PC-9 (cell line): ENCODE measurements at regions of chr2 and their contacts with region 1.

Region 1: DNA sequence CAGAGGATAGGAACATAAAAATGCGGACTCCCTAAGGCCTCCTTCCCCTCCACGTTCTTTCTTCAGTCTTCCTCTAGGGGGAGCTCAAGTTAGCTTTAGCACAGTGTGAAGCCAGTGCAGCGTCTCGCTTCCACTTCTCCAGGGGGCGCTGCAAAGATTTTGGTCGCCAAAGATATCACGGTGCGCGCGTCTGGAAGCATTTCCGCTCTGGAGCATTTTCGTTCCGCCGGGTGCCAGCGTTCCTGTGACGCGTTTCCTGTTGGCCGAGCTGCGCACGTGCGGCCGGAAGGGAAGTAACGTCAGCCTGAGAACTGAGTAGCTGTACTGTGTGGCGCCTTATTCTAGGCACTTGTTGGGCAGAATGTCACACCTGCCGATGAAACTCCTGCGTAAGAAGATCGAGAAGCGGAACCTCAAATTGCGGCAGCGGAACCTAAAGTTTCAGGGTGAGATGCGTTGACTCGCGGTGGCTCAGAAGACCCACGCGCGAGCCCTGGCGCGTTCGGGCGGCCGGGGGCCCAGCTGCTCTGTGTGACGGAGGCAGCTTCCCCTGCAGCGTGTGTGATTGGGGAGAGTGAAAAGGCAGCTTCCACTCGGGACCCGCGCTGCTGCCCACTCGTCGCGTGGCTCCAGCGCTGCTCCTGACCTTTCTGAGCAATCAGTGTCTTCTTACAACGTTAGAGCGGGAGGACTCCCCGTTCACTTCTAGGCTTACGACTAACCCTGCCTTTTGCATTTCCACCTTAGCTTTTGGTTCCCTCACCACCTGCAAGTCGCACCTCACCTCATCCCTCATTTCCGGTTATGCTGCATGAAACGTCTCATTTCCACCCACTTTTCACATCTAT is at the start of gene DDX18:
- DNase-seq: peak; percentile 95 to 96
- H3K4me3 ChIP-seq: peak within 1 kb of the TSS; percentile 97
- H3K27ac ChIP-seq: peak within 1 kb of the TSS; percentile 54
- H3K4me1 ChIP-seq: peaks cover 15% of the 10 kb centered on the region
- H3K27me3 ChIP-seq: no peaks in the 10 kb centered on the region
- CTCF ChIP-seq: peak; percentile 100
- total RNA-seq, gene DDX18: 59.8 and 76.0 TPM in 2 replicates

Region 2: GRCh38 chr2:117359266-117359914 is 455.3 kb before region 1 on chr2:
- CTCF ChIA-PET with region 1: no interaction called
- POLR2A ChIA-PET with region 1: no interaction called
- intact Hi-C with region 1: no loop called
- DNase-seq: no peak
- H3K4me3 ChIP-seq: no peak overlapping the region
- H3K27ac ChIP-seq: no peak overlapping the region
- H3K4me1 ChIP-seq: no peaks in the 10 kb centered on the region
- H3K27me3 ChIP-seq: no peaks in the 10 kb centered on the region
- CTCF ChIP-seq: no peak

Region 3: DNA sequence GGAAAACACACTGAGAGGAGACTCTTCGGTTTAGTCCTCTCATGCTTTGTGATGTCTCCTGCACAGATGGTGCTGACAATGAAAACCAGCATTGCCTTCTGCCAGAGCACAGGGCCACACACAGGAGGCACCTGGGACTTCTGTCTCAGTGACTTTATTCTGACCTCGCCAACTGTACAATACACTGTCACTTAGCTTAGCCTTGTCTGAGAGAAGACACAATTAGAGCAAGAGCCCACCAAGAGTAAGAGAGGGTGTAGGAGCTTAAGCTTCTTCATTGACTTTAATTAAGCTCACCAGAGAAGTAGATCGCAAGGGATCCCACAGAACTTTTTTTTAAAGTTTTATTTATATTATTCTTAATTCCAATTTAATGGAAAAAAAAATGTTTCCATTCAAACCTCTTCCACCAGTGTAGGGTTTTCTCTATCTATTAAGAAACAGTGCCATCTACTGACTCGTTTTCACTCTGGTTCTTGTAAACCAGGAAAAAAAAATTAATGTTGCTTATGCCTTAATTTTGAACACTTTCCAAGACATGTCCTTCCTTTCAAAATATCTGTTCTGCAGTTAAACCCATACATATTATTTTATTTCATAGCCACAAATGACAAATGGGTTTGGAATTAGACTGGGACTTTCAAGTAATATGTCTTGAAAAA is 42.5 kb before region 1 on chr2:
- CTCF ChIA-PET with region 1: no interaction called
- POLR2A ChIA-PET with region 1: no interaction called
- intact Hi-C with region 1: no loop called
- DNase-seq: no peak
- H3K4me3 ChIP-seq: no peak overlapping the region
- H3K27ac ChIP-seq: no peak overlapping the region
- H3K4me1 ChIP-seq: no peaks in the 10 kb centered on the region
- H3K27me3 ChIP-seq: peaks cover 38% of the 10 kb centered on the region
- CTCF ChIP-seq: peak; percentile 72

Region 4: GRCh38 chr2:117835990-117836760 is 21.5 kb after region 1 on chr2:
- CTCF ChIA-PET with region 1: interaction called, 3 read pairs
- POLR2A ChIA-PET with region 1: interaction called, 14 read pairs
- intact Hi-C with region 1: no loop called
- DNase-seq: no peak
- H3K4me3 ChIP-seq: no peak overlapping the region
- H3K27ac ChIP-seq: no peak overlapping the region
- H3K4me1 ChIP-seq: no peaks in the 10 kb centered on the region
- H3K27me3 ChIP-seq: no peaks in the 10 kb centered on the region
- CTCF ChIP-seq: peak; percentile 28; the same call in 1 of the 2 replicates

Region 5: DNA sequence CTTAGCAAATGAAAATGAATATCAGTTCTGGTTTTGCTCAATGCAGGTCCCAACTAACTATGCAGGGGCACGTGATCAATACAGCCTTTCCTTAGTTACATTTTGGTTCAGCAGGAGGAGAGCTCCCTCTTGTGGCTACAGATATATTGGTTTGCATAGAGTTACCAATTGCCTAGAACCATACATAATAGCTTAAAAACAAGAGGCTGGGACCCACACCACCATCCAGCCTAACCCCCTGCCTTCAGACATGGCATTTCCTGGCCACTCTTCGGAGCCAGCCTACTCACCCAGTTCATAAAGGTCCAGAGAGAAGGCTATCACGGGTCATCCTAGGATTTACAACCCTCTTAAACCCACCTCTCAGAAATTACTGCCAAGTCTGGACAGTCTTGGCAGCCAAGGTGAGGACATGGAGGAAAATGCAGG is 188.8 kb after region 1 on chr2:
- CTCF ChIA-PET with region 1: interaction called, 12 read pairs
- POLR2A ChIA-PET with region 1: no interaction called
- intact Hi-C with region 1: loop called (anchors 1 kb)
- DNase-seq: peak; percentile 38 to 73
- H3K4me3 ChIP-seq: no peak overlapping the region
- H3K27ac ChIP-seq: no peak overlapping the region
- H3K4me1 ChIP-seq: no peaks in the 10 kb centered on the region
- H3K27me3 ChIP-seq: no peaks in the 10 kb centered on the region
- CTCF ChIP-seq: peak; percentile 98

Region 6: GRCh38 chr2:118614841-118615271 is 800.2 kb after region 1 on chr2:
- CTCF ChIA-PET with region 1: no interaction called
- POLR2A ChIA-PET with region 1: no interaction called
- intact Hi-C with region 1: no loop called
- DNase-seq: no peak
- H3K4me3 ChIP-seq: no peak overlapping the region
- H3K27ac ChIP-seq: no peak overlapping the region
- H3K4me1 ChIP-seq: no peaks in the 10 kb centered on the region
- H3K27me3 ChIP-seq: peaks cover 84% of the 10 kb centered on the region
- CTCF ChIP-seq: no peak

Region 7: DNA sequence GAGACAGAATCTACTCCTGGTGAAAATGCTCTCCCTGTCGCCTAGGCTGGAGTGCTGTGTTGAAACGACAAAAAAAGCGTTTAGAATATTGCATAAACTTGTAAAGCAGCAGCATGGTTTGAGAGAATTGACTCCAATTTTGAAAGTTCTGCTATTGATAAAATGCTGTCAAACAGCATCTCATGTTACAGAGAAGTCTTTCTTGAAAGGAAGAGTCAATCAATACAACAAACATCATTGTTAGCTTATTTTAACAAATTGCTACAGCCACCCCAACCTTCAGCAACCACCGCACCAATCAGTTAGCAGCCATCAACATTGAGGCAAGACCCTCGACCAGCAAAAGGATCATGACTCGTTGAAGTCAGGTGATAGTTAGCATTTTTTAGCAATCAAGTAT is 1545.1 kb after region 1 on chr2:
- CTCF ChIA-PET with region 1: interaction called, 15 read pairs
- POLR2A ChIA-PET with region 1: no interaction called
- intact Hi-C with region 1: no loop called
- DNase-seq: no peak
- H3K4me3 ChIP-seq: no peak overlapping the region
- H3K27ac ChIP-seq: no peak overlapping the region
- H3K4me1 ChIP-seq: peaks cover 1% of the 10 kb centered on the region
- H3K27me3 ChIP-seq: no peaks in the 10 kb centered on the region
- CTCF ChIP-seq: no peak